ENCODE measurements at regions of chr10 and their contacts with region 1.

Region 1: GRCh38 chr10:71835671-71836595 is 15.1 kb downstream of the PSAP start:
- DNase-seq: peak; percentile 85
- H3K4me3 ChIP-seq: no peak overlapping the region
- H3K27ac ChIP-seq: peak overlapping the region; percentile 69 to 94
- H3K4me1 ChIP-seq: peaks cover 48 to 49% of the 10 kb centered on the region in 2 experiments
- H3K27me3 ChIP-seq: no peaks in the 10 kb centered on the region
- CTCF ChIP-seq: no peak
- EP300 ChIP-seq: peak; percentile 32 to 77; a peak in 2 of 4 replicates
- RAD21 ChIP-seq: peak; percentile 26; the same call in 1 of the 2 replicates

Region 2: DNA sequence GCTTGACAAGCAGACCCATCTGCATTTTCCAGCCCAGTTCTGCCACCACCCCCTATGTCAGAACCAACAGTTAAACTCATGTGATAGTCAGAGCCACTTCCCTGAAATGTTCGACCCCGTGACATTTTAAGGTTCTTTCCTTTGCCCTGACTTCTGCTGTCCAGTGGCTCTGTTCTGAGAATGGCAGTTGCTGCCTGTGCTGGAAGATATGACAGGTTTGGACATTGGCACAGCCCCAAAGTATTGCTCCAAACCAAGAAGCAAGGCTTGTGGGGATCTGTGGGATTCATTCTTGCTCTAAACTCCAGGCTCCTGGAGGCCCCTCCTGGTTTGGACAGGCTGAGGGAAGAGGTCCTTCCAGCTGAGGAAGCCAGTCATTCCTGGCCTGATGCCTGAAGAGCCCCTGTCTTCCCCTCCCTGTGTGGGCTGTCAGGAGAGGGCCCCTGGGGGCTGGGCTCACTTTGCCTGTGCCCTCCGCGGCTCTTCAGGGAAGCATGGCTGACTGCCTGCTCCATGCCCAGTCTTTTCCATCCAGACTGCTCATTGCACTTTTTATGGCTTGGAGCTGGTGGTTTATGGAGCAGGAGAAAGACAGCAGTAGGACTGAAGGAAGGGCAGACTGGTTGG is 301.3 kb before region 1 on chr10:
- CTCF ChIA-PET with region 1: no interaction called
- POLR2A ChIA-PET with region 1: no interaction called
- DNase-seq: no peak
- H3K4me3 ChIP-seq: no peak overlapping the region
- H3K27ac ChIP-seq: no peak overlapping the region
- H3K4me1 ChIP-seq: peaks cover 0 to 19% of the 10 kb centered on the region in 2 experiments; a peak in 1 of 4 replicates
- H3K27me3 ChIP-seq: 0 out of 2 replicates have a peak, but pooled peaks cover 12% of the 10 kb centered on the region
- CTCF ChIP-seq: no peak
- EP300 ChIP-seq: no peak
- RAD21 ChIP-seq: no peak

Region 3: DNA sequence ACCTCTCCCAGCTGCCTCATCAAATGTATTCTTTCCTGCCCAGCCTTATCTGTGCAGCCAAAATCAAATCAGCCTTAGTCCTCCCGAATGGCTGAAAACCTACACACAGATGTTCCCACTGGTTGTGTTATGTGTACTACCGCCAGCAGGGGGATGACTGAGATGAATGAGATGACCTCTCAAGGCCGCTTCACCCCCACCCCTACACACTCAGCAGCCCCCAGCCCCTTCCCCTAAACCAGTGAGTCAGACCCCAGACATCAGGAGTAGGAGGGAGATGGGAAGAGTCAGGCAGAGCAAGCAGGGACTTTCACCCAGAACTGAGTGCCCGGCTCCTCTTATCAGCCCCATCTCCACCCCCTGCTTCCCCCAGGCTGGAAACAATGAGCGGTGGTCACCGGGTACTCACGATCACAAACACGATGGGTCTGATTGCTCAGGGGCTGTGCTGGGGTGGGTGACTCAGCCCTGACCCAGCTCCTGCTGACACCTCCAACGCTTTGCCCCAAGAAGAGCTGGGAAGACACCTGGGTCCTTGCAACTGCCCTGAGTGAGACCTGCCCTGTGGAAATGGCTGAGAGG is 109.8 kb before region 1 on chr10:
- CTCF ChIA-PET with region 1: no interaction called
- POLR2A ChIA-PET with region 1: no interaction called
- DNase-seq: peak; percentile 86
- H3K4me3 ChIP-seq: no peak overlapping the region; a peak in 1 of 4 replicates
- H3K27ac ChIP-seq: peak overlapping the region in 1 of 2 experiments; percentile 91; a peak in 2 of 4 replicates
- H3K4me1 ChIP-seq: peaks cover 0 to 46% of the 10 kb centered on the region in 2 experiments; a peak in 1 of 4 replicates
- H3K27me3 ChIP-seq: 0 out of 2 replicates have a peak, but pooled peaks cover 4% of the 10 kb centered on the region
- CTCF ChIP-seq: peak; percentile 58
- EP300 ChIP-seq: peak in 1 of 2 experiments; percentile 69; a peak in 2 of 4 replicates
- RAD21 ChIP-seq: peak; percentile 41

Region 4: GRCh38 chr10:71850637-71851464 is 14.9 kb after region 1 on chr10 and contains the start of gene PSAP:
- CTCF ChIA-PET with region 1: interaction called, 5 read pairs
- POLR2A ChIA-PET with region 1: interaction called, 17 read pairs
- DNase-seq: peak; percentile 99
- H3K4me3 ChIP-seq: peak within 1 kb of the TSS; percentile 87 to 96
- H3K27ac ChIP-seq: peak within 1 kb of the TSS; percentile 85 to 97
- H3K4me1 ChIP-seq: peaks cover 15 to 24% of the 10 kb centered on the region in 2 experiments; a peak in 3 of 4 replicates
- H3K27me3 ChIP-seq: no peaks in the 10 kb centered on the region
- CTCF ChIP-seq: no peak
- EP300 ChIP-seq: peak in 1 of 2 experiments; percentile 58; a peak in 1 of 4 replicates
- RAD21 ChIP-seq: 0 out of 2 replicates have a peak, but pooled peaks have one; percentile 3
- polyA plus RNA-seq, gene PSAP: 1,647 and 1,947 TPM in 2 replicates